GM12878 (cell line): ENCODE measurements at regions of chr11 and their contacts with region 1.

Region 1: GRCh38 chr11:110447897-110448745 is 18.4 kb downstream of the FDX1 start:
- DNase-seq: no peak
- ATAC-seq: peak; percentile 65
- H3K4me3 ChIP-seq: no peak overlapping the region
- H3K27ac ChIP-seq: no peak overlapping the region
- H3K4me1 ChIP-seq: peaks cover 3% of the 10 kb centered on the region; the same call in 1 of the 2 replicates
- H3K27me3 ChIP-seq: no peaks in the 10 kb centered on the region
- CTCF ChIP-seq: peak; percentile 38 to 52 (median 49); a peak in 4 of 6 replicates
- EP300 ChIP-seq: no peak
- POLR2A ChIP-seq: no peak
- RAD21 ChIP-seq: peak; percentile 68

Region 2: DNA sequence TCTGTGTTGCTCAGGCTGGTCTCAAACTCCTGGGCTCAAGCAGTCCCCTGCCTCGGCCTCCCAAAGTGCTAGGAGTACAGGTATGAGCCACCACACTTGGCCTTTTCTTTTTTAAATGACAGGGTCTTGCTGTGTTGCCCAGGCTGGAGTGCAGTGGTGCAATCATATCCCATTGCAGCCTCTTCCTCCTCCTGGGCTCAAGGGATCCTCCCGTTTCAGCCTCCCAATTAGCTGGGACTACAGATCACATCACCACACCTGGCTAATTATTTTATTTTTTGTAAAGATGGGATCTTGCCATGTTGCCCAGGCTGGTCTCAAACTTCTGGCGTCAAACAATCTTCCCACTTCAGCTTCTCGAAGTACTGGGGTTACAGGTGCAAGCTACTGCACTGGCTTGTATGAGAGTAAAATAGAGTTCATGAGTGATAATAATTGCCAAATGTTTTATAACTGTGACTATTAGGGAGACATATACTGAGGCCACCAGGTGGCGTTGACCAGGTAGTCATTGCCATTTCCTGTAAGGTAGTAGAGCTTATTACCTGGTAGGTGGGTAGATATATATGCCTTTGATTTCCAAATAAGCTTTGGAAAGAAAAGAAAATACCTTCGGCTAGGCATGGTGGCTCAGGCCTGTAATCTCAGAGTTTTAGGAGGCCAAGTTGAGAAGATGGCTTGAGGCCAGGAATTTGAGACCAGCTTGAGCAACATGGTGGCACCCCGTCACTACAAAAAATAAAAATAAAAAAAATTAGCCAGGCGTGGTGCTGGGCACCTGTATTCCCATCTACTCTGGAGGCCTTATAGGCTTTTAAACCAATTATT is 13.0 kb before region 1 on chr11:
- CTCF ChIA-PET with region 1: interaction called, 78 read pairs
- POLR2A ChIA-PET with region 1: interaction called, 9 read pairs
- RAD21 ChIA-PET with region 1: interaction called, 8 read pairs
- SMC1A ChIA-PET with region 1: interaction called, 22 read pairs
- in situ Hi-C with region 1: no loop called
- intact Hi-C with region 1: no loop called
- DNase-seq: no peak
- ATAC-seq: peak; percentile 43
- H3K4me3 ChIP-seq: no peak overlapping the region
- H3K27ac ChIP-seq: no peak overlapping the region
- H3K4me1 ChIP-seq: peaks cover 15% of the 10 kb centered on the region
- H3K27me3 ChIP-seq: no peaks in the 10 kb centered on the region
- CTCF ChIP-seq: peak; percentile 38 to 44 (median 43); a peak in 5 of 6 replicates
- EP300 ChIP-seq: no peak
- POLR2A ChIP-seq: no peak
- RAD21 ChIP-seq: no peak

Region 3: GRCh38 chr11:110463153-110463552 is 15.0 kb after region 1 on chr11:
- CTCF ChIA-PET with region 1: interaction called, 12 read pairs
- POLR2A ChIA-PET with region 1: interaction called, 3 read pairs
- RAD21 ChIA-PET with region 1: interaction called, 5 read pairs
- SMC1A ChIA-PET with region 1: interaction called, 6 read pairs
- in situ Hi-C with region 1: no loop called
- intact Hi-C with region 1: no loop called
- DNase-seq: no peak
- ATAC-seq: peak; percentile 79
- H3K4me3 ChIP-seq: no peak overlapping the region
- H3K27ac ChIP-seq: no peak overlapping the region
- H3K4me1 ChIP-seq: no peaks in the 10 kb centered on the region
- H3K27me3 ChIP-seq: no peaks in the 10 kb centered on the region
- CTCF ChIP-seq: peak; percentile 29 to 43 (median 42); a peak in 5 of 6 replicates
- EP300 ChIP-seq: no peak
- POLR2A ChIP-seq: no peak
- RAD21 ChIP-seq: peak; percentile 54